CD8-positive, alpha-beta T cell (primary cell): ENCODE measurements at regions of chr10 and their contacts with region 1.

Region 1: GRCh38 chr10:7756360-7756992 is 31.3 kb downstream of the KIN start:
- DNase-seq: peak in 5 of 9 experiments; percentile 2 to 44 (median 31)
- ATAC-seq: no peak
- H3K4me3 ChIP-seq: no peak overlapping the region
- H3K4me3 Mint-ChIP-seq: no peak overlapping the region
- H3K27ac ChIP-seq: no peak overlapping the region
- H3K27ac Mint-ChIP-seq: no peak overlapping the region
- H3K4me1 ChIP-seq: no peaks in the 10 kb centered on the region
- H3K4me1 Mint-ChIP-seq: no peaks in the 10 kb centered on the region
- H3K27me3 ChIP-seq: no peaks in the 10 kb centered on the region
- H3K27me3 Mint-ChIP-seq: no peaks in the 10 kb centered on the region
- CTCF ChIP-seq: no peak

Region 2: DNA sequence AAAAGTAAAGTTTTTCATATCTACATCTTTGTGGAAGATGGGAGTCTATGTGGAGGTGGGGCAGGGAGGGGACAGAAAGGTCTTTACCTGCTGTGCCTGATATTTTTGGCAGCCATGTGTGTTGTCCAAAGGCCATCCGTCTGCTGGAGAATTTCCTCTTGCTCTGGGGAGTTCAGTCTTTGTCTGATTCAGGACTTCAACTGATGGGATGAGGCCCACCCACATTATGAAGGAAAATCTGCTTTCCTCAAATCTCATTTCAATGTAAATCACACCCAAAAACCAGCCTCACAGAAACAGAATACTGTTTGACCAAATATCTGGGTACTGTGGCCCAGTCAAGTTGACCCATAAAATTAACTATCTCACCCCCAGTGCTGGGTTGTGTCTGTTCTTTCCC is 77.2 kb before region 1 on chr10:
- CTCF ChIA-PET with region 1: no interaction called
- POLR2A ChIA-PET with region 1: no interaction called
- intact Hi-C with region 1: no loop called
- DNase-seq: no peak
- ATAC-seq: no peak
- H3K4me3 ChIP-seq: no peak overlapping the region
- H3K4me3 Mint-ChIP-seq: no peak overlapping the region
- H3K27ac ChIP-seq: no peak overlapping the region
- H3K27ac Mint-ChIP-seq: no peak overlapping the region
- H3K4me1 ChIP-seq: no peaks in the 10 kb centered on the region
- H3K4me1 Mint-ChIP-seq: no peaks in the 10 kb centered on the region
- H3K27me3 ChIP-seq: peaks cover 0 to 6% of the 10 kb centered on the region in 2 experiments
- H3K27me3 Mint-ChIP-seq: peaks cover 29% of the 10 kb centered on the region
- CTCF ChIP-seq: no peak

Region 3: GRCh38 chr10:7804741-7805140 is 48.3 kb after region 1 on chr10:
- CTCF ChIA-PET with region 1: no interaction called
- POLR2A ChIA-PET with region 1: no interaction called
- intact Hi-C with region 1: no loop called
- DNase-seq: no peak
- ATAC-seq: no peak
- H3K4me3 ChIP-seq: no peak overlapping the region
- H3K4me3 Mint-ChIP-seq: no peak overlapping the region
- H3K27ac ChIP-seq: no peak overlapping the region
- H3K27ac Mint-ChIP-seq: no peak overlapping the region
- H3K4me1 ChIP-seq: no peaks in the 10 kb centered on the region
- H3K4me1 Mint-ChIP-seq: peaks cover 2% of the 10 kb centered on the region
- H3K27me3 ChIP-seq: no peaks in the 10 kb centered on the region
- H3K27me3 Mint-ChIP-seq: no peaks in the 10 kb centered on the region
- CTCF ChIP-seq: no peak

Region 4: GRCh38 chr10:9209105-9209798 is 1452.8 kb after region 1 on chr10:
- CTCF ChIA-PET with region 1: no interaction called
- POLR2A ChIA-PET with region 1: no interaction called
- intact Hi-C with region 1: loop called in 1 of 2 experiments (anchors 10 kb)
- DNase-seq: peak; percentile 51 to 84 (median 69)
- ATAC-seq: peak; percentile 64
- H3K4me3 ChIP-seq: no peak overlapping the region
- H3K4me3 Mint-ChIP-seq: no peak overlapping the region
- H3K27ac ChIP-seq: no peak overlapping the region
- H3K27ac Mint-ChIP-seq: no peak overlapping the region
- H3K4me1 ChIP-seq: peaks cover 6% of the 10 kb centered on the region
- H3K4me1 Mint-ChIP-seq: peaks cover 5% of the 10 kb centered on the region
- H3K27me3 ChIP-seq: no peaks in the 10 kb centered on the region
- H3K27me3 Mint-ChIP-seq: peaks cover 6% of the 10 kb centered on the region
- CTCF ChIP-seq: peak; percentile 96

Region 5: GRCh38 chr10:9302120-9302746 is 1545.8 kb after region 1 on chr10:
- CTCF ChIA-PET with region 1: interaction called, 10 read pairs
- POLR2A ChIA-PET with region 1: no interaction called
- intact Hi-C with region 1: loop called (anchors 2 kb)
- DNase-seq: peak in 3 of 9 experiments; percentile 19 to 63 (median 51)
- ATAC-seq: peak; percentile 44
- H3K4me3 ChIP-seq: no peak overlapping the region
- H3K4me3 Mint-ChIP-seq: no peak overlapping the region
- H3K27ac ChIP-seq: no peak overlapping the region
- H3K27ac Mint-ChIP-seq: no peak overlapping the region
- H3K4me1 ChIP-seq: no peaks in the 10 kb centered on the region
- H3K4me1 Mint-ChIP-seq: no peaks in the 10 kb centered on the region
- H3K27me3 ChIP-seq: no peaks in the 10 kb centered on the region
- H3K27me3 Mint-ChIP-seq: peaks cover 11% of the 10 kb centered on the region
- CTCF ChIP-seq: peak; percentile 59